ENCODE measurements at regions of chr5 and their contacts with region 1.

Region 1: GRCh38 chr5:144125163-144125726 is 45.2 kb downstream of the YIPF5 start:
- DNase-seq: no peak
- ATAC-seq: peak in 2 of 4 donors; percentile 20 to 47
- H3K4me3 ChIP-seq: no peak overlapping the region
- H3K27ac ChIP-seq: no peak overlapping the region
- H3K4me1 ChIP-seq: peaks cover 0 to 5% (median 0%) of the 10 kb centered on the region in 12 donors
- H3K27me3 ChIP-seq: no peaks in the 10 kb centered on the region
- CTCF ChIP-seq: no peak
- POLR2A ChIP-seq: no peak

Region 2: GRCh38 chr5:144040615-144041305 is 84.5 kb before region 1 on chr5:
- intact Hi-C with region 1: loop called in 4 of 10 experiments (anchors 10 kb)
- DNase-seq: no peak
- ATAC-seq: peak in 1 of 4 donors; percentile 34
- H3K4me3 ChIP-seq: no peak overlapping the region
- H3K27ac ChIP-seq: no peak overlapping the region
- H3K4me1 ChIP-seq: no peaks in the 10 kb centered on the region
- H3K27me3 ChIP-seq: no peaks in the 10 kb centered on the region
- CTCF ChIP-seq: no peak
- POLR2A ChIP-seq: no peak

Region 3: DNA sequence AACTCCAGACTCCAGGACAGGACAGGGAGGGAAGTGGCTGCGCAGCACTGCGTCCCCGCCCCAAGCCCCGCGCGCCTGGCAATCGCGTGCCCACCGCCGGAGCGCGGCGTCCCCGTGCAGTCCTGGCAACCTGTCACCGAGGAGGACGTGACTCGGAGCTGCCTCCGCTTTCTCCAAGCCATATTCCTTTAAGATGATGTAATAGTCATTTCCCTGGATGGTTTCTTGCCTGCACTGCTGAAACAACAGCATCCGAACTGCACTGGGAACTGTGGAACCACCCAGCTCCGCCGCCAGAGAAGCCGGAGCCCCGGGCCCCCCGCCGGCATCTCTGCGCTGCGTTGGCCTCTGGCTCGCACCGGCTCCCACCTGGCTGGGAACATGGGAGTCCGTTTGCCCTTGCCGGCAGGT is 79.9 kb after region 1 on chr5:
- intact Hi-C with region 1: no loop called
- DNase-seq: peak in 1 of 5 donors; percentile 27
- ATAC-seq: peak in 2 of 4 donors; percentile 26 to 65
- H3K4me3 ChIP-seq: peak overlapping the region in 6 of 12 donors; percentile 1 to 36 (median 19)
- H3K27ac ChIP-seq: no peak overlapping the region
- H3K4me1 ChIP-seq: peaks cover 0 to 16% (median 5%) of the 10 kb centered on the region in 12 donors
- H3K27me3 ChIP-seq: peaks cover 9 to 74% (median 40%) of the 10 kb centered on the region in 9 donors
- CTCF ChIP-seq: no peak
- POLR2A ChIP-seq: no peak

Measured in heart left ventricle (tissue), 16 donors.